RWPE1 (cell line): ENCODE measurements at regions of chr2 and their contacts with region 1.

Region 1: GRCh38 chr2:9813312-9814133 is 29.8 kb upstream of the TAF1B start:
- DNase-seq: peak; percentile 68
- H3K27ac ChIP-seq: peak overlapping the region; percentile 36
- CTCF ChIP-seq: peak; percentile 92

Region 2: GRCh38 chr2:9703085-9703641 is 110.4 kb before region 1 on chr2:
- CTCF ChIA-PET with region 1: no interaction called
- POLR2A ChIA-PET with region 1: no interaction called
- DNase-seq: peak; percentile 87
- H3K27ac ChIP-seq: peak overlapping the region; percentile 91
- CTCF ChIP-seq: no peak

Region 3: DNA sequence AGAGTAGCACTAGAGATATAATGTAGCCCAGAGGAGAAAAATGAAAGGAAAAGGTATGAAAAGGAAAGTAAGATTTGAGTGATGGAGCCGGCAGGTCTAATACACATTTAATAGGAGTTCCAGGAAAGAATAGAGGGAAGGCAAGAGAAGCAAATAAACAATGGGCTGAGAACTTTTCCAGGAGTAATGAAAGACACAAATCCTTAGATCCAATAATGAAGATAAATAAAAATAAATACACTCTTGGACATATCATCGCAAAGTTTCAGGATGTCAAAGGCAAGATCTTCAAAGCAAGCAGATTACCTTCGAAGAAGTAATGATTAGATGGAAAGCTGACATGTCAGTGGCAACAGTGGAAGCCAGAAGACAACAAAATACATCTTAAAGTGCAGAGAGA is 80.7 kb before region 1 on chr2:
- CTCF ChIA-PET with region 1: interaction called, 10 read pairs
- POLR2A ChIA-PET with region 1: no interaction called
- DNase-seq: no peak
- H3K27ac ChIP-seq: no peak overlapping the region
- CTCF ChIP-seq: no peak

Region 4: DNA sequence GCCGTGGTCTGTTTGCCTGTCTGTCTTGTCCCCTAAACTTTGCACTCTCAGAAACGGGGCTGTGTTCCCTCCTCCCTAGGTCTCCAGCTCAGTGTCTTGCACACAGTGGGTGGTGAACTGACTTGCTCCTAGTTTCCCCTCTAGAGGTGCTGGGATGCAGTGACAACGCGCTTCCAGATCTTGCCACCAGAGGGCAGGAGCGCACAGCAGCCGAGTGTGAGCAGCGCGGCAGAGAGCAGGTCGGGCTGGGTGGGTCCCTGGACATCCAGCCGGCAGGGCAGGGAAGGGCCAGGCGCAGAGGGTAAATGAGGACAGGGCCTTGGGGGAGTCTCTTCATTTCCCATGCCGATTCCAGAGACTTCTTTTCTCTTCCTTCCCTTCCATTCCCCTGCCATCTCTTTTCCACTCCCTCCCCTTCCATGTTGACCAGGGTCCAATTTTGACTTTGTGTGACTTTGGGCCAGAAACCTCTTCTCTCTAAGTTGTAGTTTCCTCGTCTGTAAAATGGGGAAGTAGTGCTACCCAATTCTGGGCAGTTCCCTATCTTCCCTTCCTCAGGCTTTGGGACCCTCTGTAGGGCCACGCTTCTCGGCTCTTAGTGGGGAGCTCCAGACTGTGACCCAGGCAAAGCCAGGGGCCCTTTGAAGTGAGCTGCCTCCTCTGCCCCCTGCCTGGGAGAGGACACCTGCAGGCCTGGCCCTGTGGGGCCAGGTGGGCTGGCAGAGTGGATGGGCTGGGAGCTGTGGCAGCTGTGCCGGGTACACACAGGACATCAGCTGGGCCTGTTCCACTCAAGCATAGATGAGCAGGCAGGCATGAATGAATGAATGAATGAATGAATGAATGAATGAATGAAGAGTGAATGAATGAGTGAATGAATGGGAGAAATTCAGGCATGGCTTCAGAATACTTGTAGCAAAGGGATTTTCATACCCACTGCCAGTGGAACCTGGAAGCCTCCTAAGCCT is 13.6 kb before region 1 on chr2:
- CTCF ChIA-PET with region 1: interaction called, 56 read pairs
- POLR2A ChIA-PET with region 1: no interaction called
- DNase-seq: peak; percentile 83
- H3K27ac ChIP-seq: peak overlapping the region; percentile 100
- CTCF ChIP-seq: peak; percentile 97

Region 5: DNA sequence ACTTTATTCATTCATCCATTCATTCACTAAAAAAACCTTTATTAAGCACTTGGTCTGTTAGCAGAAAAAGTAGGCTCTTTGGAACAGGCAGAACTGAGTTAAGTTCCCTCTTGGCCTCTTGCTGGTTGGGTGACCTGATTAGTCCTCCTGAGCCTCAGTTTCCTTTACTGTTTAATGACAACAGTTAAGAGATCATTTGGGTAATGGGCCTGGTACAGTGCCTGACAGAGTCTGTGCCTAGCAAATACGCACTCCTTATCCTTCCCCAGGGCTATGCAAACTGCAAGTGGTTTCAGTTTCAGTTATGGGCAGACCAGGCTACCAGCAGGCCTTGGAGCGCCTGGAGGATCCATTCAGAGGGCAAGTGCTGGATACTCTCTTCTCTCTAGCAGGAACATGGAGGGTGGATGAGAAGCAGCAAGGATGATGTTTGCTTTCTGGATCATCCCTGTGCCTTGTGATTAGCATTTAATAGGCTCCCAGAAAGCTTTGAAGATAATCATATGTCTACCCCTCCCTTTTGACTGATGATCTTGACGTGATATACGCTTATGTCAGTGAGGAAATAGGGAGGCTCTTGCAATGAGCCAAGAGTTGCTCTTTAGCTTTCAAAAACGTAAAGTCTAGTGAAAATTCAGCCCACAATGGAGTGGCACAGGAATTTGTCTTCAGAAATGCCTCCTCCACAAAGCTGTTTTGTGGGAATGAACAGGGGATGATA is 17.3 kb after region 1 on chr2:
- CTCF ChIA-PET with region 1: interaction called, 11 read pairs
- POLR2A ChIA-PET with region 1: no interaction called
- DNase-seq: no peak
- H3K27ac ChIP-seq: no peak overlapping the region
- CTCF ChIP-seq: no peak

Region 6: DNA sequence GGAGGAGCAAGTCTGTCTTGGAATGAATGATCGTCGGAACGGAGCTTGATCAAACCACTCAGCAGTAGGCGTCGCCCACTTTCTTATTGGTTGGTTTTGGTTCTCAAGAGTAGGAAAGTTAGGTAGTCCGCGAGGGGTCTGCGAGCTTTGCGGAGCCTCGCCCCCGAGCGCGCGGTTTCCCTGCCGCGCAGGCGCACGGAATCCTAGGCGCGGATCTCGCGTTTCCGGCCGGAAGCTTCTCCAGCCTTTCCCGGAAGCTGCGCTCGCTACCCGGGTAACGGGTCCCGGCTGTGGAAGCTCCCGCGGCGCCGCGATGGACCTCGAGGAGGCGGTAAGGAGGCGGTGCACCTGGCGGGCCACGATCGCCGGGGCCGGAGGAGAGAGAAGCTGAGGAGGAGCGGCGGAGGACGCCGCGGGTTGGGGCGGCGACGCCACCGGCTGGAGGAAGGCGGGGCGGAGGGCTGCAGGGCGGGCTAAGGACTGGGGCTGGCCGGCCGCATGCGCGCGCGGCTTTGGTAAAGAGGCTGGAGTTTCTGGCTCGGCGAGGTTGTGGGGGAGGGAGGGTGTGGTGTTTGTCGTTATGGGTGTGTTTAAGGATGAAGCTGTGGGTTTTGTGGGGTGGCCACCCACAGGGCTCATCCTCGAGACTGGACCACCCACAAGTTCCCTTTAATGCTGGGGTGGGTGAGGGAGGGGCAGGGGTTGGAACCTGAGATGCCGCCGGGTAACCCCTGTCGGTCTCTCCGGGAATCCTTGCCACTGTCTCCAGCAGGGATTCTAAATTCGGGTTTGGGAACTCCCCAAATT is 29.9 kb after region 1 on chr2 and contains the start of gene TAF1B:
- CTCF ChIA-PET with region 1: interaction called, 37 read pairs
- POLR2A ChIA-PET with region 1: interaction called, 5 read pairs
- DNase-seq: peak; percentile 94
- H3K27ac ChIP-seq: peak within 1 kb of the TSS; percentile 95
- CTCF ChIP-seq: peak; percentile 63

Region 7: DNA sequence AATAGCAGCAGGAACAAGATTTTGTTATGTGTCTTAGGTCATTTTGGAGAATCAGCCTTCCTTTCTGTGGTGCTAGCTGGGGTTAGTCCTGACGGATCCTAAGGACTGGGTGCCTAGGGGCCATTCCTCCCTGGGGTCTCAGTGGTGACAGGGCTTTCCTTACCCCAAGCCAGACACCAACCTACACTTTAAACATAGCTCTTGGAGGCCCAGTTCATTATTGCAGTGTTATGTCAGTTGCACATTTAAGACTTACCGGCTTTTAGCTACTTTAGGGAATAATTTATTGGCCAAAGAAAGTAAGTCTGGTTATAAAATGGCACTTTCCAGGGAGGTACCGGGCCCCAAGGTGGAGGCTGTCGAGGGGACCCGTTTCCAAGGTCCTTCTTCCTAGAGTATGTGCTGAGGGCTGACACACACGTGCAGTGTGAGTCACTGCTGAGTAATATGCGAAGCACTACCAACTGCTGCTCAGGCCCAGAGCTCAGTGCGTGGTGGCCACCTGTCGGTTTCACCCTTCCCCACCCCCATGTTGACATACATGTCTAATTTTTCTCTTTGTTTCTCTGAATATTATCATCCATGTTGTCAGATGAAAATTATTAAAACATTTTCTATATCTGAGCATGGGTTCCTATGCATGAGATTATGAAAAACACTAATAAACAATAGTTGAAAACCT is 101.0 kb after region 1 on chr2:
- CTCF ChIA-PET with region 1: interaction called, 21 read pairs
- POLR2A ChIA-PET with region 1: no interaction called
- DNase-seq: peak; percentile 78
- H3K27ac ChIP-seq: peak overlapping the region; percentile 59
- CTCF ChIP-seq: peak; percentile 54

Region 8: DNA sequence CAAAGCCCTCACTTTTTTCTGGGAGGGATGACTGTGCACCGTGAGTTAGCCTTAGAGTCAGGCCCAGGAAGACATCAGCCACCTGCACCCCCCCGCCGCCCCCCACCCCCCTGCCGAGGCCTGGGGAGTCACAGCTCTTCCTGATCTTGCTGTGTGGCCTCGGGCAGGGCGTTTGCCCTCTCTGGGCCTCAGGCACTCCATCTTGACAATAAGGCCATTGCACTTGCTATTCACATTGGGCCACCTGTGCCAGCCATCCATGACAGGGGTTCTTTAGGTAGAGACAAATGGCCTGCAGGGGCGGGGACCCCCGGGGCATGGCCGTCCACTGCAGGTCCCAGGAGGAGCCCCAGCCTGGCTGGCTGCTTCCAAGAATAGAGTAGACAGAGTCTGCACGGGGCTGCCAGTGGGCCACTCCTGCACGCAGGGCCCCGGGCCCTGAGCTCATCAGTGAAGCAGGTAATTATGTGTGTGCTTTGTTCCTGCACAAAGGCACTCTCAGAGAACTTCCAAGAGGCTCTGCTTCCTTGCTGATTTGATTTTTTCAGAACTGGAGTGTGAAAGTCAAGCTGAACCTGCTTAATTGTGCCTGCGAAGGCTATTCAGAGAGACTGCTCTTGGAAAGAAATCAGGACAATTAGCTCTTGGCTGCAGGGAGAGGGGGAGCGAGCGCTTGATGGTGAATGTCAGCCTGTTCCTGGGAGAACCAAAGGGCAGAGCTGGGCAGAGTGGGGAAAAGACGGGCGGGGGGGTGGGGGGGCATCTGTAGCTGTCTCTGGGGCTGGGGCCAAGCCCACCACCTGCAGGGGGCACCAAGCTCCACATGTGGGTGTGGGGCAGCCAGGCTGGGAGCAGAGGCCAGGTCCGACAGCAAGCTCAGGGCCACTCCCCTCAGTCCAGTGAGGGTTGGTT is 349.3 kb after region 1 on chr2:
- CTCF ChIA-PET with region 1: no interaction called
- POLR2A ChIA-PET with region 1: no interaction called
- DNase-seq: no peak
- H3K27ac ChIP-seq: no peak overlapping the region
- CTCF ChIP-seq: no peak